ENCODE measurements at regions of chr18 and their contacts with region 1.

Region 1: DNA sequence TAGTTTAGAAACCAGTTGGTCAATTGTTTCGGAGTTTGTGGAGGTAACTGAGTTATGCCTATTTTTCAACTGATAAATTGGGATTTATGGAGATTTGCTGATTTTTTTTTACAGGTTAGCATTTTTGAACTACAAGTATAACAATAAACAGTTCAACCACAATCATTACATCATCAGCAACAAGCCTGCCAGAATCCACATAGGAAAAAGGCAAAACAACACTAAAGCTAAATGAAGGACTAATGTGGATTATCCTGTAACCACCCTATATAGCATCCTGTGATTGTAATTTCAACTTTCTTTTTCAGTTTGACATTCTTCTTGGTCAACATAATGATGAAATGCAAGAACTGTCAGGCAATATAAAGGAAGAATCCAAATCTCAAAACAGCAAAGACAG is 76.5 kb downstream of the CCDC102B start:
- DNase-seq: no peak
- H3K4me3 ChIP-seq: no peak overlapping the region
- H3K27ac ChIP-seq: no peak overlapping the region
- H3K4me1 ChIP-seq: no peaks in the 10 kb centered on the region
- H3K27me3 ChIP-seq: no peaks in the 10 kb centered on the region
- CTCF ChIP-seq: no peak
- EP300 ChIP-seq: no peak
- POLR2A ChIP-seq: no peak

Region 2: DNA sequence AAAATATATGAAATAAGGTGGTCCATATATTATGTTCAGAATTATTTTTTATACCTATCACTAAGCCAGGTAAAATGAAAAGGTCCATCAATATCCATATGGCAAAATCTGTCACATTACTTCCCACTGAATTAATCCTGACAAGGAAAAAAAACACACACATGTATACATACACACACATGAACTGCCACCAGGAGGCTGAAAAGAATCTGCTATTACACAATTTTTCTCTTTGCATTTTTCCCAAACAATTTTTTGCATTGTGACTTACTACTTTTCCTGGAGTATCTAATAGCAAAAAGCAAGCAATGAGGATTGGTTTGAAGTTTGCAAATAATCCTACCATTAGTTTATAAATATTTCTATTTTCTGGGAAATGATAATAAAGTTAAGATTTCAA is 1201.5 kb after region 1 on chr18:
- in situ Hi-C with region 1: loop called in 1 of 4 experiments (anchors 25 kb)
- intact Hi-C with region 1: no loop called
- DNase-seq: no peak
- H3K4me3 ChIP-seq: no peak overlapping the region
- H3K27ac ChIP-seq: no peak overlapping the region
- H3K4me1 ChIP-seq: no peaks in the 10 kb centered on the region
- H3K27me3 ChIP-seq: no peaks in the 10 kb centered on the region
- CTCF ChIP-seq: no peak
- EP300 ChIP-seq: no peak
- POLR2A ChIP-seq: no peak

Measured in transverse colon (tissue), 4 donors.